CD8-positive, alpha-beta memory T cell (primary cell): ENCODE measurements at regions of chr3 and their contacts with region 1.

Region 1: GRCh38 chr3:49406571-49407566 is 4.9 kb downstream of the RHOA start:
- DNase-seq: no peak
- H3K4me3 ChIP-seq: no peak overlapping the region
- H3K4me3 Mint-ChIP-seq: peak overlapping the region; percentile 27 to 73 (median 54)
- H3K27ac ChIP-seq: no peak overlapping the region
- H3K27ac Mint-ChIP-seq: peak overlapping the region; percentile 44 to 96 (median 82)
- H3K4me1 ChIP-seq: peaks cover 57% of the 10 kb centered on the region
- H3K4me1 Mint-ChIP-seq: peaks cover 58 to 75% (median 70%) of the 10 kb centered on the region in 3 donors
- H3K27me3 ChIP-seq: no peaks in the 10 kb centered on the region
- H3K27me3 Mint-ChIP-seq: no peaks in the 10 kb centered on the region

Region 2: GRCh38 chr3:49428697-49429100 is 21.8 kb after region 1 on chr3:
- CTCF ChIA-PET with region 1: interaction called, 7 read pairs
- POLR2A ChIA-PET with region 1: interaction called, 24 read pairs
- DNase-seq: no peak
- H3K4me3 ChIP-seq: peak overlapping the region; percentile 83
- H3K4me3 Mint-ChIP-seq: peak overlapping the region; percentile 89 to 99 (median 96)
- H3K27ac ChIP-seq: peak overlapping the region; percentile 87
- H3K27ac Mint-ChIP-seq: peak overlapping the region in 7 of 8 donors; percentile 59 to 98 (median 95)
- H3K4me1 ChIP-seq: peaks cover 4% of the 10 kb centered on the region
- H3K4me1 Mint-ChIP-seq: peaks cover 14 to 32% (median 28%) of the 10 kb centered on the region in 3 donors
- H3K27me3 ChIP-seq: no peaks in the 10 kb centered on the region
- H3K27me3 Mint-ChIP-seq: no peaks in the 10 kb centered on the region

Region 3: DNA sequence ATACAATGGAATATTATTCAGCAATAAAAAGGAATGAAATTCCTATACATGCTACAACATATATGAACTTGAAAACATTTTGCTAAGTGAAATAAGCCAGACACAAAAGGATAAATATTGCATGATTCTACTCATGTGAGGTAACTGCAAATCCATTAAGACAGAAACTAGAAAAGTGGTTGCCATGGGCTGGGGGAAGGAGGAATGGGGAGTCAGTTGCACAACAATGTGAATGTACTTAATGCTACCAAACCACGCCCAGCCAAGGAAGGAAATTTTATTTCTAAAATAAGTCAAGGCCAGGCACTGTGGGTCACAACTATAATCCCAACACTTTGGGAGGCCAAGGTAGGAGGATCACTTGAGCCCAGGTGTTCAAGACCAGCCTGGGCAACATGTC is 326.7 kb after region 1 on chr3:
- CTCF ChIA-PET with region 1: no interaction called
- POLR2A ChIA-PET with region 1: no interaction called
- DNase-seq: no peak
- H3K4me3 ChIP-seq: no peak overlapping the region
- H3K4me3 Mint-ChIP-seq: no peak overlapping the region
- H3K27ac ChIP-seq: no peak overlapping the region
- H3K27ac Mint-ChIP-seq: no peak overlapping the region
- H3K4me1 ChIP-seq: no peaks in the 10 kb centered on the region
- H3K4me1 Mint-ChIP-seq: peaks cover 0 to under 1% (median under 1%) of the 10 kb centered on the region in 3 donors
- H3K27me3 ChIP-seq: no peaks in the 10 kb centered on the region
- H3K27me3 Mint-ChIP-seq: peaks cover 0 to 2% of the 10 kb centered on the region in 2 donors